ENCODE measurements at regions of chr5 and their contacts with region 1.

Region 1: GRCh38 chr5:126462239-126463014 is 39.2 kb downstream of the GRAMD2B start:
- DNase-seq: no peak
- ATAC-seq: peak; percentile 83
- H3K4me3 Mint-ChIP-seq: peak overlapping the region; percentile 44
- H3K27ac Mint-ChIP-seq: peak overlapping the region; percentile 64
- H3K4me1 Mint-ChIP-seq: peaks cover 20% of the 10 kb centered on the region
- H3K27me3 Mint-ChIP-seq: no peaks in the 10 kb centered on the region
- CTCF ChIP-seq: no peak

Region 2: DNA sequence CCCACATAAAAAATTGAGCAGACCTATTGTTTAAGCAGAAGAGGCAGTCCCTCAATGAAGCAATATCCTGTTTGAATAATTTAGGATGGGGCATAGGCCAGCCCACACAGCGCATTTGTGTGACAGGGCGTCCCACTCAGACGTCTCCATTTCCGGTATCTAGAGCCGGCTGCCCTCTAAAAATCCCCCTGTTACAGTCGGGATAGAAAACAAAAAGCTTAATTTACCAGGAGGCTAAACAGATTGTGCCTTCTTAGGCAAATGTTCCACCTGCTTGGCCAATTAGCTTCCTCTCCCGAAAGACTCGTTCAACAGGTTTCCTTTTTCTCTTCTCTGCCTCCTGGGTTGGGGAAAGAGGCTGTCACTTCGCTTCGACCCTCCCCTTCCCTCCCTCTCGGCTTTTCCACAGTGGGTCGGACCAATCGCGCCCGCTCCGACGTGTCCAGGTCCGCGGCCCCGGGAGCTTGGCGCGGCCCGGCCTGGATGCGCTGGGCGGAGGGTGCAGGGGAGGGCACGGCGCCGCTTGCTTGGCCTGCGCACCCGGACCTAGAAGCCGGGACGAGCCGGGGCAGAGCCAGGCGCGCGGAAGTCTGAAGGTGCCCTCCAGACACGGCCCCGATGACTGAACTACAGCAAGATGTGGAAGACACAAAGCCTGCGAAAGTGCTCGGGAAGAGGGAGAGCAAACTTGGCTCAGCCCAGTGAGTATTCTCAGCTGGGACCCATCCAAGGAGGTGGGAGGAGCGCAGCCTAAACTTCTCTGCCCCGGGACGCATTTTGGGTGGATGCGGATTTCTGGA is 39.2 kb before region 1 on chr5 and contains the start of gene GRAMD2B:
- CTCF ChIA-PET with region 1: no interaction called
- POLR2A ChIA-PET with region 1: interaction called, 6 read pairs
- intact Hi-C with region 1: loop called (anchors 2 kb)
- DNase-seq: peak; percentile 53
- ATAC-seq: peak; percentile 86
- H3K4me3 Mint-ChIP-seq: peak within 1 kb of the TSS; percentile 88
- H3K27ac Mint-ChIP-seq: peak within 1 kb of the TSS; percentile 76
- H3K4me1 Mint-ChIP-seq: peaks cover 26% of the 10 kb centered on the region
- H3K27me3 Mint-ChIP-seq: no peaks in the 10 kb centered on the region
- CTCF ChIP-seq: no peak
- total RNA-seq, gene GRAMD2B: 4.9 and 5.9 TPM in 2 replicates

Region 3: DNA sequence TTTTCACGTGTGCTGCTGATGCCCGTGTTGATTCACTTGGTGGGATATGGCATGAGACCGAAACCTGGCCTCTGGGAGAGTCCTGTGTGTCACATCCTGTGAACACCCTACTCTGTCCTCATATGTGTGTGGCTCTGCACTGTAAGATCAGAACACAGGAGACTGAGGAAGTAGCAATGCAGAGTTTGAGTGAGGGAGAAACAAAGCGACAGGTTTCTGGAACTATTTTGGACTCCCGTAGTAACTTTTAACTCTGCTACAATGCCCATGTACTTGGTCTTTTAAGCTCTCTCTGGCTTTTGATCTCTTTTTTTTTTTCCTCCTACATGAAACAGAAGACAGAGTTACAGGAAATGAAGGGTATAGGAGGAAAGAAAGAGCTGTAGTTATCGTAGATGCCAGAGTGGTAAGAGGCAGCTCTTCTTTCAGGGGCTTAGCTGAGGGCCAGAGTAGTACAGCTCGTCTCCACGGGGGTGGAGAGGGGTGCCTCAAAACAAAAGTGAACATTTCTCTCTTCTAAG is 12.6 kb before region 1 on chr5:
- CTCF ChIA-PET with region 1: no interaction called
- POLR2A ChIA-PET with region 1: no interaction called
- intact Hi-C with region 1: loop called (anchors 1 kb)
- DNase-seq: no peak
- ATAC-seq: peak; percentile 83
- H3K4me3 Mint-ChIP-seq: peak overlapping the region; percentile 77
- H3K27ac Mint-ChIP-seq: peak overlapping the region; percentile 84
- H3K4me1 Mint-ChIP-seq: peaks cover 17% of the 10 kb centered on the region
- H3K27me3 Mint-ChIP-seq: no peaks in the 10 kb centered on the region
- CTCF ChIP-seq: no peak

Region 4: DNA sequence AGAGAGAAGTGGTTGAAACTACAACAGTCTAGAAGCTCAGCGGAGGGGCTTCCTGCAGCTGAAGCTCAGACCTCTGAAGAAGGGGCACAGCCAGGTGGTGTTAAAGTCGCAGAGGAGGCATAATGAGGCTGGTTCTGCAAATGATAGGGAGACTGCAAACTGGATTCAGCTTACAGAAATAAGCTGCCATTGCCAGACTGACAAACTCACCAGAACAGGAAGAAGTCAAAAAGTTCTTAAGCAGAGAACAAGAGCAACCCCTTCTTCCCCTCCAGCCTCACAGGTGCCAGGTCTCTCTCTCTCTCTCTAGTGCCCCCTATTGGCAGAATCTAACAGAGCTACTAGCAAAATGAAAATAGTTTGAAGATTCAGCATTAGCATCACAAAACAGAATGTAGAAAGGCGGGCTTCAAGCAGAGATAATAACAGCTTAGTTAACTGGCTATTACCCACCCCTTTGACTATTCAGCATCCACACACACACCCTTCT is 37.5 kb after region 1 on chr5:
- CTCF ChIA-PET with region 1: no interaction called
- POLR2A ChIA-PET with region 1: no interaction called
- intact Hi-C with region 1: no loop called
- DNase-seq: no peak
- ATAC-seq: no peak
- H3K4me3 Mint-ChIP-seq: no peak overlapping the region
- H3K27ac Mint-ChIP-seq: no peak overlapping the region
- H3K4me1 Mint-ChIP-seq: no peaks in the 10 kb centered on the region
- H3K27me3 Mint-ChIP-seq: peaks cover 2% of the 10 kb centered on the region
- CTCF ChIP-seq: no peak

Measured in activated B cell treated with CpG ODN at 0.5 μM for 24 hours (primary cell).